Heart left ventricle (tissue), 16 donors: ENCODE measurements at regions of chr1 and their contacts with region 1.

Region 1: DNA sequence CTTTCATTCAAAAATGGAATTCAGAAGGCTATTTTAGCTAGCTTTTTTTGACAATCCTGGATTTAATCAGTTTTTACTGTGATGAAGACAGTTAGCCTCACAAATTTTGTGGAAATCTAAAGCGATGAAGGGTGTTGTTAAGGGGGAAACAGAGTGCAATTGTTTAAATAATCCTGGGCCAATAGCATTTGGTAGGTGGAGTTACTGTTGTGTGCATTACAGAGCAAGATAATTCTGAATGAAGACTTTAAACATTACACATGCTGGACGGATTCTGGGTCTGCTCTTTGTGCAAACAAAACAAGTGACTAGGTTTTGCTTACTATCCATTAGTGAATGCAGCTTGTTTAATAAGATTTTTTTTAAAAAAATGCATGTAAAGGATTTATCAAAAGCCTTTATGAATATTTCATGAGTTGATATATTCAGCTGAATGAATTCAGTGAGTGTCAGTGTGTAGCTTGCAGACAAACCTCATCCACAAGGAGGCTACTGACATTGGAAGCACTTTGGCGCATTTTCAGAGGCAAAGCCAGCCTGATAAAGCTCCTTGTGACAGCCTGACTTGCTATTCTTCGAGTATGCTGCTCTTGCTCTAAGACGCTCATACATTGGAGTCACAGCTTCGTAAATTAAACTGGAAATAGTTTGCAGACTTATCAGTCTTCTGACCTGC is 199.6 kb downstream of the PDE4B start:
- DNase-seq: no peak
- ATAC-seq: no peak
- H3K4me3 ChIP-seq: no peak overlapping the region
- H3K27ac ChIP-seq: no peak overlapping the region
- H3K4me1 ChIP-seq: no peaks in the 10 kb centered on the region
- H3K27me3 ChIP-seq: peaks cover 0 to 14% (median 0%) of the 10 kb centered on the region in 9 donors
- CTCF ChIP-seq: no peak
- POLR2A ChIP-seq: no peak

Region 2: DNA sequence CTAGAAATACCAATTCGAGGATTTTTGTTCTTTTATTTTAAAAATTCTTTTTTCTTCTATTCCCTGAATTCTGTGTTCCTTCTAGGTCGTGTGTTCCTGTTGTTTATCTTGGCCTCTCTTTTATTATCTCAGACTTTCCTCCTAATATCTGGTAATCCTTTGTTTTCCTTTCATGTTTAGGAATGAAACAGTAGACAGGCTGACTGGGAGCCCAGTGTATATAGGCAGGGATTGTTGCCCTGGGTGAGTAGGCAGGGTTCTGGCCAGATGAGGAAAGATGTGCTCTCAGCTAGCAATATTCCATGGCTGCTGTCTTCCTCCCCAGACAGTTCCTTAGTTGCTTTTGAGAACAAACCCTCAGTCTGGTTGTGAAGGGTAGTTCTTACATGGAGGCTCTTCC is 361.4 kb before region 1 on chr1:
- intact Hi-C with region 1: no loop called
- DNase-seq: no peak
- ATAC-seq: peak in 1 of 4 donors; percentile 22
- H3K4me3 ChIP-seq: no peak overlapping the region
- H3K27ac ChIP-seq: no peak overlapping the region
- H3K4me1 ChIP-seq: no peaks in the 10 kb centered on the region
- H3K27me3 ChIP-seq: no peaks in the 10 kb centered on the region
- CTCF ChIP-seq: no peak
- POLR2A ChIP-seq: no peak

Region 3: GRCh38 chr1:66012106-66012784 is 19.9 kb after region 1 on chr1:
- intact Hi-C with region 1: loop called in 1 of 10 experiments (anchors 2 kb)
- DNase-seq: no peak
- ATAC-seq: no peak
- H3K4me3 ChIP-seq: no peak overlapping the region
- H3K27ac ChIP-seq: no peak overlapping the region
- H3K4me1 ChIP-seq: no peaks in the 10 kb centered on the region
- H3K27me3 ChIP-seq: peaks cover 0 to 14% (median 0%) of the 10 kb centered on the region in 9 donors
- CTCF ChIP-seq: no peak
- POLR2A ChIP-seq: no peak

Region 4: GRCh38 chr1:66197785-66198184 is 205.5 kb after region 1 on chr1:
- intact Hi-C with region 1: no loop called
- DNase-seq: no peak
- ATAC-seq: no peak
- H3K4me3 ChIP-seq: no peak overlapping the region
- H3K27ac ChIP-seq: no peak overlapping the region
- H3K4me1 ChIP-seq: no peaks in the 10 kb centered on the region
- H3K27me3 ChIP-seq: no peaks in the 10 kb centered on the region
- CTCF ChIP-seq: no peak
- POLR2A ChIP-seq: no peak

Region 5: GRCh38 chr1:66624412-66625060 is 632.2 kb after region 1 on chr1:
- intact Hi-C with region 1: loop called in 1 of 10 experiments (anchors 5 kb)
- DNase-seq: no peak
- ATAC-seq: peak in 2 of 4 donors; percentile 42 to 78
- H3K4me3 ChIP-seq: no peak overlapping the region
- H3K27ac ChIP-seq: peak overlapping the region in 5 of 12 donors; percentile 5 to 57 (median 26)
- H3K4me1 ChIP-seq: peaks cover 0 to 15% (median 3%) of the 10 kb centered on the region in 12 donors
- H3K27me3 ChIP-seq: no peaks in the 10 kb centered on the region
- CTCF ChIP-seq: no peak
- POLR2A ChIP-seq: no peak